ENCODE measurements at regions of chr12 and their contacts with region 1.

Region 1: GRCh38 chr12:120228291-120229070 is 27.6 kb upstream of the RPLP0 start:
- DNase-seq: peak; percentile 93
- ATAC-seq: peak; percentile 68
- H3K4me3 ChIP-seq: no peak overlapping the region
- H3K27ac ChIP-seq: peak overlapping the region; percentile 77
- H3K4me1 ChIP-seq: peaks cover 86% of the 10 kb centered on the region
- H3K27me3 ChIP-seq: no peaks in the 10 kb centered on the region
- CTCF ChIP-seq: peak; percentile 96

Region 2: DNA sequence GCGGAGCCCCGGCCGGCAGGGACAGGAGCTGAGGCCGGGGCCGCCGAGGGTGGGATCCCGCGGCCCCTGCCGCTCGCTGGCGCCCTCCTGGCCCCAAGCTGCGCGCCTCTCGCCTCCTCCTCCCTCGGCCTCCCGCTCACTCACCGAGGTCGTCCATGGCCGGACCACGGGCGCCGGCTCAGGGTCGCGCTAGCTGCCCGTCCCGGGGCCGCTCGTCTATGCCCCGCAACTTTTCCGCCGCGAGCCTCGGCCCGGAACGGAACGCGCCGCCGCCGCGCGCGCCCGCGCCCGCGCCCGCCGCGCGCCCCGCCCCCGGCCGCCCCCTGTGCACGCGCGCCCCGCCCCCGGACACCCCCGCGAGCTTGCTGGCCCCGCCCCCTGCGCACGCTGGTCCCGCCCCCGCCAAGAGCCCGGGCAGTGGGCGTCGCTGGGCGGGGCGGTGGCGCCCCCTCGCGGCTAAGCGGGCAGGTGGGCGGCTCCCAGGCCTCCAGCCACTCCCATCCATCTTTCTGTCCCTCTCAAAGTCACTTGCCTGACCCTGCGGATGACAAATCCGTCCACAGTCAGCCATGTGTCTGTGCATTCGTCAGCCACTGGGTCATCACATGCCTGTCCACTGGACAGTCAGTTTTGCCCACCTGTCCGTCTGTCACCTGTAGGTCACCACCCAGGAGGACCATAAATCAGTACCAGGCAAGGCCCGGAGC is 37.1 kb after region 1 on chr12 and contains the start of gene PXN:
- intact Hi-C with region 1: loop called (anchors 5 kb)
- DNase-seq: peak; percentile 94
- ATAC-seq: peak; percentile 97
- H3K4me3 ChIP-seq: peak within 1 kb of the TSS; percentile 68
- H3K27ac ChIP-seq: peak within 1 kb of the TSS; percentile 83
- H3K4me1 ChIP-seq: peaks cover 42% of the 10 kb centered on the region
- H3K27me3 ChIP-seq: no peaks in the 10 kb centered on the region
- CTCF ChIP-seq: peak; percentile 85
- total RNA-seq, gene PXN: 105 TPM

Measured in upper lobe of right lung (tissue), 1 donor.